ENCODE measurements at regions of chr3 and their contacts with region 1.

Region 1: DNA sequence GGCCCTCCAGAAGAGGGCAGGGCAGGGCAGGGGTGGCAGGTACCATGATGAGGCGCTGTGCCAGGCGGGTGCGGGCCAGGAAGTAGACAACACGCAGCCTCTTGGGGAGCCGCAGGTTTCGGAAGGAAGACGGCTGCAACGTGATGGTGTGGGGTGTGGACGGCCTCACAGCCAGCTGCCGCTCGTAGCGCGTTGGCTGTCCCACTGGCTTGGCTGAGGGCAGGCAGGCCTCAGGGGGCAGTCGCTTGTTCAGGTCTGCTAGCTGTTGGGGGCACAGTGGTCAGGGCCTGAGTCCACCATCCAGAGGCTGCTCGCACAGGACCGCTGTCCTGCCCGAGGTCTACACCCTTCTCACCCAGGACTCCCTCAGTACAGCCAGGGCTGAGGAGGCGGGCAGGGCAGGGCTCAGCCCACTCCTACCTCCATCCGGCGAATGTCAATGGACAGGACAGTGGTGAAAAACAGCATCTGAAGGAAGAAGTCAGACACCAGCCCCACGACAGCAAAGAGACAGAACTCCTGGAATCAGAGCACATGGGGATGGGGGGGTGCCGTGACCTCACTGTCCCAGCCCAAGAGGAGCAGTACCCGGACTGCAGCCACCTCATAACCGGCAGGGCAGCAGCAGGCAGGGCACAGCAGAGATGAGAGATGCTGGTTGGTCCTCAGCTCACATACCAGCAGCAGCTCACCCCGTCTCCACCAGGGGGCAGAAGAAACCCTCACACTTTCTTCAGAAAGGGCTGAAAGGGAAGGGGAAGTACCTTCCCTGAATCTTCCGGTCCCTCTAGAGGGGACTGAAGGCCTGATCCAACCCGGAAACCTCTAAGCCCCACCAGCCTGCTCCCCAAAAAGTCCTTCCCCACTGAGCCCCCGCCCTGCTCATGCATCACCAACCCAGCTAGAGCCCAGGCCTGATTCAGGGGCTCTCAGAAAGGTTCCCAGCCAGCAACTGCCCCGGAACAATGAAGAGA is 40.0 kb downstream of the PTPN23 start:
- DNase-seq: peak; percentile 83
- ATAC-seq: peak; percentile 92
- H3K4me3 ChIP-seq: no peak overlapping the region
- H3K27ac ChIP-seq: peak overlapping the region; percentile 79
- H3K4me1 ChIP-seq: peaks cover 10% of the 10 kb centered on the region; the same call in 1 of the 2 replicates
- H3K27me3 ChIP-seq: no peaks in the 10 kb centered on the region
- CTCF ChIP-seq: peak; percentile 96
- POLR2A ChIP-seq: no peak
- RAD21 ChIP-seq: peak; percentile 79

Region 2: GRCh38 chr3:47398228-47398627 is 22.6 kb before region 1 on chr3:
- CTCF ChIA-PET with region 1: no interaction called
- POLR2A ChIA-PET with region 1: no interaction called
- dilution Hi-C with region 1: no loop called
- in situ Hi-C with region 1: no loop called
- intact Hi-C with region 1: loop called (anchors 1 kb)
- DNase-seq: peak; percentile 81
- ATAC-seq: peak; percentile 40
- H3K4me3 ChIP-seq: no peak overlapping the region
- H3K27ac ChIP-seq: peak overlapping the region; percentile 81; the same call in 1 of the 2 replicates
- H3K4me1 ChIP-seq: peaks cover 24% of the 10 kb centered on the region
- H3K27me3 ChIP-seq: no peaks in the 10 kb centered on the region
- CTCF ChIP-seq: no peak
- POLR2A ChIP-seq: no peak
- RAD21 ChIP-seq: no peak

Region 3: GRCh38 chr3:47475570-47476329 is 55.0 kb after region 1 on chr3 and contains the start of gene SCAP:
- CTCF ChIA-PET with region 1: interaction called, 3 read pairs
- POLR2A ChIA-PET with region 1: no interaction called
- dilution Hi-C with region 1: no loop called
- in situ Hi-C with region 1: loop called (anchors 5 kb)
- intact Hi-C with region 1: loop called (anchors 1 kb)
- DNase-seq: peak; percentile 64
- ATAC-seq: peak; percentile 94
- H3K4me3 ChIP-seq: peak within 1 kb of the TSS; percentile 85
- H3K27ac ChIP-seq: peak within 1 kb of the TSS; percentile 83
- H3K4me1 ChIP-seq: peaks cover 2% of the 10 kb centered on the region; the same call in 1 of the 2 replicates
- H3K27me3 ChIP-seq: no peaks in the 10 kb centered on the region
- CTCF ChIP-seq: peak; percentile 87
- POLR2A ChIP-seq: no peak
- RAD21 ChIP-seq: peak; percentile 51
- total RNA-seq, gene SCAP: 30.8 and 34.6 TPM in 2 replicates

Region 4: DNA sequence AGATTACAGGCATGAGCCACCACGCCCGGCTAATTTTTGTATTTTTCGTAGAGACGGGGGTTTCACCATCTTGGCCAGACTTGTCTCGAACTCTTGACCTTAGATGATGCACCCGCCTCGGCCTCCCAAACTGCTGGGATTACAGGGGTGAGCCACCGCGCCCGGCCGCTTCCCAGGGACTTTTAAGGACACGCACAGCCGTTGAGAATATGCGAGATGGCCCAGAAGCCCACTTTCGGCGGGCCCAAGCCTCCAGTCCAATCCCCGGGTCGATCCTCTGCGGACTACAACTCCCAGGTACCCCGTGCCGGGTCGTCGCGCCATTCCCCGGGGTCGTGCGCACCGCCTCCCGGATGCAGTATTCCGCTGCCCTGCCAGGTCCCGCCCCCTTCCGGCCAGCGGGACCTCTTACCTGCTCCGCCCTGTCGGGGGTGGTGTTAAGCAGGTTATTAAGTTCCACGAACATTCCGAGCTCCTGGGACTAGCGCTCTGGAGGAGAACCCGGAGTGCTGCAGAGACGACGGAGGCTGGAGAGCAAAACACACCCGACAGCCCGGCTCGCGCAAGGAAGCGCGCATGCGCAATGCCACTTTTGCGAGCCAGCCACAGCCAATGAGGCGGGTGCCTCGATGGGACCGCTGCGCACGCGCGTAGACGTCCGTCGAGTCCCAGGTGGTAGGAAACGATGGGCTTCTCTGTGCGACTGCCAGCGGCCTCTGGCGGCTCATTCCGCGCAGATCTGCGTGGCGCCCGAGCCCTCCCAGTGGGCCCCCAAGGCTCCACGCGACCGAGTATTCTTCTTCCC is 92.5 kb after region 1 on chr3 and contains the start of gene ELP6:
- CTCF ChIA-PET with region 1: no interaction called
- POLR2A ChIA-PET with region 1: no interaction called
- dilution Hi-C with region 1: no loop called
- in situ Hi-C with region 1: no loop called
- intact Hi-C with region 1: loop called (anchors 1 kb)
- DNase-seq: peak; percentile 94
- ATAC-seq: peak; percentile 98
- H3K4me3 ChIP-seq: peak within 1 kb of the TSS; percentile 69
- H3K27ac ChIP-seq: peak within 1 kb of the TSS; percentile 90
- H3K4me1 ChIP-seq: peaks cover 2% of the 10 kb centered on the region; the same call in 1 of the 2 replicates
- H3K27me3 ChIP-seq: no peaks in the 10 kb centered on the region
- CTCF ChIP-seq: peak; percentile 62
- POLR2A ChIP-seq: peak; percentile 50
- RAD21 ChIP-seq: peak; percentile 59
- total RNA-seq, gene ELP6: 26.1 and 31.4 TPM in 2 replicates

Region 5: GRCh38 chr3:47781685-47782445 is 361.1 kb after region 1 on chr3 and contains the start of gene SMARCC1:
- CTCF ChIA-PET with region 1: no interaction called
- POLR2A ChIA-PET with region 1: no interaction called
- dilution Hi-C with region 1: no loop called
- in situ Hi-C with region 1: loop called (anchors 5 kb)
- intact Hi-C with region 1: no loop called
- DNase-seq: peak; percentile 97
- ATAC-seq: peak; percentile 93
- H3K4me3 ChIP-seq: peak within 1 kb of the TSS; percentile 61
- H3K27ac ChIP-seq: peak within 1 kb of the TSS; percentile 92
- H3K4me1 ChIP-seq: peaks cover 2% of the 10 kb centered on the region
- H3K27me3 ChIP-seq: no peaks in the 10 kb centered on the region
- CTCF ChIP-seq: no peak
- POLR2A ChIP-seq: peak; percentile 87
- RAD21 ChIP-seq: no peak
- total RNA-seq, gene SMARCC1: 39.6 and 51.4 TPM in 2 replicates

Region 6: DNA sequence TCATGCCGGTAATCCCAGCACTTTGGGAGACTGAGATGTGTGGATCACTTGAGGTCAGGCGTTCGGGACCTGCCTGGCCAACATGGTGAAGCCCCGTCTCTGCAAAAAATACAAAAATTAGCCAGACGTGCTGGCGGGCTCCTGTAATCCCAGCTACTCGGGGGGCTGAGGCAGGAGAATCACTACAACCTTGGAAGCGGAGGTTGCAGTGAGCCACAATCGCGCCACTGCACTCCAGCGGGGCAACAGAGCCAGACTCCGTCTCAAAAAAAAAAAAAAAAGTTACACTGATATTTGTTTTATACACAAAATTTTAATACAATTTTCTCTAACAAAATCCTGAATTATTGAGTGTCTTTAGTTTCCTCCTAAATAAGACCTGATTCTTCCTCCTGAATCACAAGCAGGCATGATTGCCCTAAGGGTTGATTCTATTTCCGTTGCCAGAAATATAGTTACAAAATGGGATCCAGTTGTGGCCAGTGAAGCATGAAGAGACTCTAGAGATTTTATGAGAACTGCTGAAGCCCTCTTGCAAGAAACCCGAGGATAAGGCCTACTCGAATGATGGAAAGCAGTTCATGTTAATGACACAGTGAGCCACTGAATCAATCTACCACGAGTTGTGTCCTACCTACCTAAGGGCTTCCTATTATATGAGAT is 370.5 kb after region 1 on chr3:
- CTCF ChIA-PET with region 1: no interaction called
- POLR2A ChIA-PET with region 1: no interaction called
- dilution Hi-C with region 1: no loop called
- in situ Hi-C with region 1: loop called (anchors 5 kb)
- intact Hi-C with region 1: loop called (anchors 1 kb)
- DNase-seq: no peak
- ATAC-seq: no peak
- H3K4me3 ChIP-seq: no peak overlapping the region
- H3K27ac ChIP-seq: no peak overlapping the region
- H3K4me1 ChIP-seq: no peaks in the 10 kb centered on the region
- H3K27me3 ChIP-seq: no peaks in the 10 kb centered on the region
- CTCF ChIP-seq: no peak
- POLR2A ChIP-seq: no peak
- RAD21 ChIP-seq: no peak

Measured in IMR-90 (cell line).